Psoas muscle (tissue), 8 donors: ENCODE measurements at regions of chr11 and their contacts with region 1.

Region 1: GRCh38 chr11:124793466-124794278 is 6.5 kb downstream of the MSANTD2 start:
- DNase-seq: no peak
- ATAC-seq: peak in 1 of 4 donors; percentile 72
- H3K4me3 ChIP-seq: no peak overlapping the region
- H3K27ac ChIP-seq: no peak overlapping the region
- H3K4me1 ChIP-seq: peaks cover 34% of the 10 kb centered on the region
- H3K27me3 ChIP-seq: no peaks in the 10 kb centered on the region
- CTCF ChIP-seq: peak; percentile 63

Region 2: GRCh38 chr11:124732230-124732629 is 61.4 kb before region 1 on chr11:
- intact Hi-C with region 1: no loop called
- DNase-seq: no peak
- ATAC-seq: no peak
- H3K4me3 ChIP-seq: no peak overlapping the region
- H3K27ac ChIP-seq: no peak overlapping the region
- H3K4me1 ChIP-seq: no peaks in the 10 kb centered on the region
- H3K27me3 ChIP-seq: no peaks in the 10 kb centered on the region
- CTCF ChIP-seq: no peak

Region 3: GRCh38 chr11:124763156-124763947 is 30.3 kb before region 1 on chr11:
- intact Hi-C with region 1: loop called in 1 of 2 experiments (anchors 2 kb)
- DNase-seq: peak; percentile 84 to 92
- ATAC-seq: peak; percentile 39 to 79 (median 64)
- H3K4me3 ChIP-seq: peak overlapping the region; percentile 74
- H3K27ac ChIP-seq: peak overlapping the region; percentile 81
- H3K4me1 ChIP-seq: peaks cover 27% of the 10 kb centered on the region
- H3K27me3 ChIP-seq: peaks cover 0 to 39% (median 23%) of the 10 kb centered on the region in 3 donors
- CTCF ChIP-seq: peak; percentile 74